ENCODE measurements at regions of chr5 and their contacts with region 1.

Region 1: DNA sequence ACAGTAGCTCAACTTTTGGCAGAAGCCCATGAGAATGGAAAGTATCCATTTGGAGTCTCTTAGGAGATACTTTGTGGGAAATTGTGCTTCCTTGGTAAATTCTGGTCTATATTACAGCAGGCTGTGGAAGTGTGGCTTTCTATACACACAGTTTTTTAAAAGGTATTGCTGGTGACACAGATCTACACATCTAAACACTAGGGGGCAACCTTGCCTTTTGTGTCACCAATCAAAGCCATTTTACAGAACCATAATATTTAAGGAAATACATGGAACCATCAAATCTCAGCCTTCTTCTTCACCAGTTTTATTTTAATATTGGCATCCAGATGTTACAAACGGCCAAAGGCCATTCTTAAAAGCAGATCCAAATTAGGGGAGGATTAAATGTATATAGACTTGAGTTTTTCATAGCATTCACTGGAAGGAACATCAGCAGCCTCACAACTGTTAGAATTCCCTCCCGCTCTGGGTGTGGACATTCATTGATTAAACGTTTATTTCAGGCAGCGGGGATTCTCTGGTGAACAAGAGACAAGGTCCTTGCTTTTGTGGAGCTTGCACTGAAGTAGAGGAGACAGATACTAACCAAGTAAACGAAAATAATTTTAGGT is 132.4 kb upstream of the EPB41L4A start:
- DNase-seq: peak in 5 of 9 experiments; percentile 25 to 71 (median 32)
- ATAC-seq: peak; percentile 51
- H3K4me3 ChIP-seq: no peak overlapping the region
- H3K4me3 Mint-ChIP-seq: no peak overlapping the region
- H3K27ac ChIP-seq: no peak overlapping the region
- H3K27ac Mint-ChIP-seq: no peak overlapping the region
- H3K4me1 ChIP-seq: no peaks in the 10 kb centered on the region
- H3K4me1 Mint-ChIP-seq: no peaks in the 10 kb centered on the region
- H3K27me3 ChIP-seq: no peaks in the 10 kb centered on the region
- H3K27me3 Mint-ChIP-seq: no peaks in the 10 kb centered on the region
- CTCF ChIP-seq: peak; percentile 76

Region 2: GRCh38 chr5:112604732-112605630 is 53.5 kb after region 1 on chr5:
- CTCF ChIA-PET with region 1: interaction called, 6 read pairs
- POLR2A ChIA-PET with region 1: no interaction called
- intact Hi-C with region 1: loop called in 1 of 2 experiments (anchors 1 kb)
- DNase-seq: peak in 1 of 9 experiments; percentile 48
- ATAC-seq: peak; percentile 26
- H3K4me3 ChIP-seq: no peak overlapping the region
- H3K4me3 Mint-ChIP-seq: no peak overlapping the region
- H3K27ac ChIP-seq: no peak overlapping the region
- H3K27ac Mint-ChIP-seq: no peak overlapping the region
- H3K4me1 ChIP-seq: no peaks in the 10 kb centered on the region
- H3K4me1 Mint-ChIP-seq: peaks cover 3% of the 10 kb centered on the region
- H3K27me3 ChIP-seq: no peaks in the 10 kb centered on the region
- H3K27me3 Mint-ChIP-seq: peaks cover 15% of the 10 kb centered on the region
- CTCF ChIP-seq: no peak

Region 3: DNA sequence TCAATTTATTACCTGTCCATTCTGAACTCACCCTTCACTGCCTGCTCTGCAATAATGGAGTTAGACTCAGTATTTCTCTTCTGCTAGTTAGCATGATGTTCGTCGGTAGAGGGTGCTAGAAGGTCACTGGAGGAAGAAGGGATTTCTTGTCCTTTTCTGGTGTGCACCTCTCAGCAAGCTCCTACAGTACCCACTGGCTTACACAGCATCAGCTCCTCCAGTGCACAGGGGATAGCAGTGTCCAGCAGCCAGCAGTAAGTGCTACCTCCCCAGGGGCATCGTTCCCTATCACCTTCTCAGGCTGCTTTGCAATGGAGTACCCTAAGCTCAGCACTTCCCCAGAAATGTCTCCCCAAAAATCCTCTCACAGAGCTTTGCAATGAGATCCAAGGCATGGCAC is 140.2 kb after region 1 on chr5:
- CTCF ChIA-PET with region 1: interaction called, 13 read pairs
- POLR2A ChIA-PET with region 1: no interaction called
- intact Hi-C with region 1: loop called in 1 of 2 experiments (anchors 5 kb)
- DNase-seq: peak in 3 of 9 experiments; percentile 10 to 74 (median 40)
- ATAC-seq: peak; percentile 36
- H3K4me3 ChIP-seq: no peak overlapping the region
- H3K4me3 Mint-ChIP-seq: no peak overlapping the region
- H3K27ac ChIP-seq: no peak overlapping the region
- H3K27ac Mint-ChIP-seq: no peak overlapping the region
- H3K4me1 ChIP-seq: no peaks in the 10 kb centered on the region
- H3K4me1 Mint-ChIP-seq: no peaks in the 10 kb centered on the region
- H3K27me3 ChIP-seq: peaks cover 0 to 2% of the 10 kb centered on the region in 2 experiments
- H3K27me3 Mint-ChIP-seq: peaks cover 38% of the 10 kb centered on the region
- CTCF ChIP-seq: no peak

Region 4: DNA sequence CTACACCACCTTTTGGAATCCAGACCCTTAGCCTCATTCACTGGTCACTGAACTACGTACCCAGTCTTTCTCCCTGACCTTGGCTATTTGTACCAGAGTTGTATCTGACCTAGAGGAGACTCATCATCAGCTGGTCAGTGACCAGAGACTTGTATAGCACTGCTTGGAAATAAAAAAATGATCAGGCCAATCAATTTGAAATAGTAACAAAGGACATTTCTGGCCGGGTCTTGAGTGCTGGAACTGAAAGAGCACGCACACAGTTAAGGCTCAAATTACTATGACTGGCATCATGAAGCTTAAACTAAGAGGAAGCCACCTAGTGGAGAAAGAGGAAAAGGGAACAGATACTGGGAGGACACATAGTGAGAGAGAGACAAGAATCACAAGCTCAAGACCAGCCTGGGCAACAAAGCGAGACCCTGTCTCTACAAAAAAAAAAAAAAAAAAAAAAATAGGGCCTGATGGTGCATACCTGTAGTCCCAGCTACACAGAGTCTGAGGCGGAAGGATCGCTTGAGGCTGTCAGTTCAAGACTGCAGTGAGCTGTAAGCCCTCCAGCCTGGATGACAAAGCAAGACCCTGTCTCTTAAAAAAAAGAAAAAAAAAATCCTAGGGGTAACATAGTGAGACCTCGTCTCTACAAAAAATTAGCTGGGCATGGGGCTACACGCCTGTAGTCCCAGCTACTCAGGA is 296.7 kb after region 1 on chr5:
- CTCF ChIA-PET with region 1: interaction called, 7 read pairs
- POLR2A ChIA-PET with region 1: no interaction called
- intact Hi-C with region 1: loop called (anchors 1 to 5 kb)
- DNase-seq: peak in 3 of 9 experiments; percentile 11 to 68 (median 58)
- ATAC-seq: peak; percentile 99
- H3K4me3 ChIP-seq: no peak overlapping the region
- H3K4me3 Mint-ChIP-seq: no peak overlapping the region
- H3K27ac ChIP-seq: no peak overlapping the region
- H3K27ac Mint-ChIP-seq: peak overlapping the region; percentile 21
- H3K4me1 ChIP-seq: no peaks in the 10 kb centered on the region
- H3K4me1 Mint-ChIP-seq: peaks cover 4% of the 10 kb centered on the region
- H3K27me3 ChIP-seq: no peaks in the 10 kb centered on the region
- H3K27me3 Mint-ChIP-seq: peaks cover 7% of the 10 kb centered on the region
- CTCF ChIP-seq: peak; percentile 80

Region 5: GRCh38 chr5:112968411-112969106 is 417.0 kb after region 1 on chr5:
- CTCF ChIA-PET with region 1: interaction called, 3 read pairs
- POLR2A ChIA-PET with region 1: no interaction called
- intact Hi-C with region 1: loop called (anchors 2 to 5 kb)
- DNase-seq: no peak
- ATAC-seq: no peak
- H3K4me3 ChIP-seq: no peak overlapping the region
- H3K4me3 Mint-ChIP-seq: no peak overlapping the region
- H3K27ac ChIP-seq: no peak overlapping the region
- H3K27ac Mint-ChIP-seq: no peak overlapping the region
- H3K4me1 ChIP-seq: peaks cover 5% of the 10 kb centered on the region
- H3K4me1 Mint-ChIP-seq: peaks cover 6% of the 10 kb centered on the region
- H3K27me3 ChIP-seq: no peaks in the 10 kb centered on the region
- H3K27me3 Mint-ChIP-seq: no peaks in the 10 kb centered on the region
- CTCF ChIP-seq: no peak

Region 6: DNA sequence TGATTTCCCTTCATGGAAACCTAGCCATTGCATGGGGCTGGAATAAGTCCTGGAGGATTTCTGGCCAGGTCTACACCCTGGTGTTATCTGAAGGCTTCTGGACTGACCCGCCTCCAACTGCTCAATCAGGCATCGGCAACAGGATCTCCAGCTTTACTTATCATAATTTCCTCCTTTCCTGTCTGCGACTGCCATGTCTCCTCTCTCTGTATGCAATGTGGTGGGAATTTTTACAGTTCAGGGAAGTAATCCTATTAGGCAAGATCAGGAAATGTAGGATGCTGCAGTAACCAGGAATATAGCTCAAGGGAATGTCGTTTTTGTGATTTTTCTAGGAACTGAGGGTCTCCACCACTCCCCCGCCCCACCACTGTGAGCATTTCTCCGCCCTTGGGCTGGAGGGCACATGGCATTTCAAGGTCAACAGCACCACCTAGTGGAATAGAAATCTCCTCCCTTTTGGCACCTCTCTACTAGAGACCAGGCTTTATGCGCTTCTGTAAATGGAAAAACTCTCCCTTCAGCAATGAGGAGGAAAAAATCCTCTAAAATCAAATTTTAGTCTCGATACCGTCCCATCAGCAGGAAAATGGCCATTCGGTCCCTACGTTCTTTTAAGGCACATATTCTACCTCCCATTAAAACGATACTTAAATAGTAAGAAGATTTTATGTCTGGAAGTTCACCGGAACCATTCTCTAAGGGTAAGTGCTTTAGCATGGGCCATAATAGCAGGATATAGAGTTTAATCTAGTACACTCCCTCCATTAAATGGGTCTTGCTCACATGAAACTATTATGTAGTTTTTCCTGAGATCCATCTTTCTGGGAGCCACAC is 1055.0 kb after region 1 on chr5:
- CTCF ChIA-PET with region 1: interaction called, 4 read pairs
- POLR2A ChIA-PET with region 1: no interaction called
- intact Hi-C with region 1: loop called (anchors 5 kb)
- DNase-seq: peak in 8 of 9 experiments; percentile 10 to 73 (median 42)
- ATAC-seq: peak; percentile 74
- H3K4me3 ChIP-seq: no peak overlapping the region
- H3K4me3 Mint-ChIP-seq: no peak overlapping the region
- H3K27ac ChIP-seq: no peak overlapping the region
- H3K27ac Mint-ChIP-seq: no peak overlapping the region
- H3K4me1 ChIP-seq: no peaks in the 10 kb centered on the region
- H3K4me1 Mint-ChIP-seq: peaks cover 4% of the 10 kb centered on the region
- H3K27me3 ChIP-seq: peaks cover 0 to 5% of the 10 kb centered on the region in 2 experiments
- H3K27me3 Mint-ChIP-seq: peaks cover 22% of the 10 kb centered on the region
- CTCF ChIP-seq: peak; percentile 75

Measured in CD8-positive, alpha-beta T cell (primary cell).